ENCODE measurements at regions of chr18 and their contacts with region 1.

Region 1: GRCh38 chr18:68714609-68715496 is at the start of gene TMX3:
- DNase-seq: peak; percentile 90
- H3K4me3 Mint-ChIP-seq: peak within 1 kb of the TSS; percentile 92
- H3K27ac Mint-ChIP-seq: peak within 1 kb of the TSS; percentile 87
- H3K4me1 Mint-ChIP-seq: peaks cover 51% of the 10 kb centered on the region
- H3K27me3 Mint-ChIP-seq: no peaks in the 10 kb centered on the region
- total RNA-seq, gene TMX3: 63.7 and 65.0 TPM in 2 replicates

Region 2: GRCh38 chr18:67515945-67516538 is 1198.8 kb before region 1 on chr18:
- intact Hi-C with region 1: loop called (anchors 2 kb)
- DNase-seq: peak; percentile 14
- H3K4me3 Mint-ChIP-seq: peak overlapping the region; percentile 81
- H3K27ac Mint-ChIP-seq: no peak overlapping the region
- H3K4me1 Mint-ChIP-seq: peaks cover 17% of the 10 kb centered on the region
- H3K27me3 Mint-ChIP-seq: peaks cover 49% of the 10 kb centered on the region

Region 3: DNA sequence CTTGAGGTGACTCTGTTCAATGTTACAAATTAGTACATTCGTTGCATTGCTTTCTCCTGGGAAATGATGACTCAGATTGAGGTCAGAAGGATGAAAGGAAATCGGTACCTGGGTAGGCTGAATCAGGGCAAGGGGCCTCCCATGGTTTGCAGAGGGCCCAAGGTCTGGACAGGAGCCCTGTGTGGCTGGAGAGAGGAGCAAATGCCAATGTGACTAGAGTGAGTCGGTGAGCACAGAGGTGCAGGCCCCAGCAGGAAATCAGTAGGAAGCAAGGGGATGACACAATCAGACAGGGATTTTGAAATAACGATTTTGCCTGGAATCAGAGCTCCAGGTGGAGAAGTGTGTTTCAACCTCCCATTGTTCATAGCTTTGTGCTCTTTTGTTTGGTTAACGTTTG is 201.9 kb after region 1 on chr18:
- intact Hi-C with region 1: no loop called
- DNase-seq: no peak
- H3K4me3 Mint-ChIP-seq: no peak overlapping the region
- H3K27ac Mint-ChIP-seq: no peak overlapping the region
- H3K4me1 Mint-ChIP-seq: no peaks in the 10 kb centered on the region
- H3K27me3 Mint-ChIP-seq: peaks cover 3% of the 10 kb centered on the region